Breast epithelium (tissue), 4 donors: ENCODE measurements at regions of chr15 and their contacts with region 1.

Region 1: DNA sequence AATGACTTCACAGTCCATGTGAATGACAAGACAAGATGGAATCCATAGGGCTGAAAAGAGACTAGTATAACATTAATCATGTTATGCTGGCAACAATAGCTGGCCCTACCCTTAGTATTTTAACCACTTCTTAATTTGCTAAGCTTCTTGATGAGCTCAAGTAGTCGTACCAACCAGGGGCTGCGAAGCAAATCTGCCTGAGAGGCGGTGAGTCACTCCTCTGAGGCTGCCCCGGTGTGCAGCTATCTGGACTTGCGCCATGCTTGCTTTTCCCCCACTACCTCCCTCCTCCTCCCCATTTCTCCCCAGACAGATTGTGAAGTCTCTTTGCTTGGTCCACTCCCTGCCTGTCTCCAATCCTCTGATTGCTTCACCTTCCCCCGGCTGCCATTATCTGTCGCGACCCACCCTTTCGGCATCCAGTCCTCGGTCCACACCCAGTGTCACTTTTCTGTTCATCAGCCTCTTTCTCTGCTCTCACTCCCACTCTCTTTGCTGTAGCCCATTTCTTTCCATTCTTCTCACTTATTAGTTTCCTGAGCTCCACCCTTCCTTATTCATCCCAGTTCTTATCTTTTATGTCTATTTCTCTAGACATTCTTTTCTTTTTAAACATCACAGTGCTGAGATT is 42.7 kb downstream of the DUT start:
- DNase-seq: no peak
- H3K4me3 ChIP-seq: no peak overlapping the region
- H3K27ac ChIP-seq: no peak overlapping the region
- H3K4me1 ChIP-seq: no peaks in the 10 kb centered on the region
- H3K27me3 ChIP-seq: no peaks in the 10 kb centered on the region
- CTCF ChIP-seq: no peak
- POLR2A ChIP-seq: no peak

Region 2: GRCh38 chr15:46786590-46787285 is 1587.2 kb before region 1 on chr15:
- intact Hi-C with region 1: loop called (anchors 5 kb)
- DNase-seq: no peak
- H3K4me3 ChIP-seq: no peak overlapping the region
- H3K27ac ChIP-seq: no peak overlapping the region
- H3K4me1 ChIP-seq: no peaks in the 10 kb centered on the region
- H3K27me3 ChIP-seq: no peaks in the 10 kb centered on the region
- CTCF ChIP-seq: no peak
- POLR2A ChIP-seq: no peak

Region 3: DNA sequence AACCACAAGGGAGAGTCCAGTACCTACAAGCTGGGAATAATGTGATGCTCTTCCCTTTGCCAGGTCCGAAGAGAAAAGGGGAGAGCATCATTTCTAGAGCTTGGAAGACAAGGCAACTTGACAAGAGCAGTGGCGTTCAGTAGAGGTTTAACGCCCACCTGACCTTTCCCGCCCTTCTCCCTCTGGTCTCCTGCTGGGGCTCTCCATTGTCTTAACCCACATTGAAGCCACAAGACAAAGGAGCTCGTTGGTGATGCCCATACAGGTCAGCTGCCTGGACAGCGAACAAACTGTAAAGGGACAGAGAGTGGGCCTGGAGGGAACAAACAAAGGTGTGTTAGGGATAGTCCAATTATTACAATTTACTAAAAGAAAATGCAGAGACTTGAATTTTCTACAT is 55.8 kb before region 1 on chr15:
- intact Hi-C with region 1: no loop called
- DNase-seq: no peak
- H3K4me3 ChIP-seq: no peak overlapping the region
- H3K27ac ChIP-seq: no peak overlapping the region
- H3K4me1 ChIP-seq: no peaks in the 10 kb centered on the region
- H3K27me3 ChIP-seq: no peaks in the 10 kb centered on the region
- CTCF ChIP-seq: no peak
- POLR2A ChIP-seq: no peak